ENCODE measurements at regions of chr22 and their contacts with region 1.

Region 1: DNA sequence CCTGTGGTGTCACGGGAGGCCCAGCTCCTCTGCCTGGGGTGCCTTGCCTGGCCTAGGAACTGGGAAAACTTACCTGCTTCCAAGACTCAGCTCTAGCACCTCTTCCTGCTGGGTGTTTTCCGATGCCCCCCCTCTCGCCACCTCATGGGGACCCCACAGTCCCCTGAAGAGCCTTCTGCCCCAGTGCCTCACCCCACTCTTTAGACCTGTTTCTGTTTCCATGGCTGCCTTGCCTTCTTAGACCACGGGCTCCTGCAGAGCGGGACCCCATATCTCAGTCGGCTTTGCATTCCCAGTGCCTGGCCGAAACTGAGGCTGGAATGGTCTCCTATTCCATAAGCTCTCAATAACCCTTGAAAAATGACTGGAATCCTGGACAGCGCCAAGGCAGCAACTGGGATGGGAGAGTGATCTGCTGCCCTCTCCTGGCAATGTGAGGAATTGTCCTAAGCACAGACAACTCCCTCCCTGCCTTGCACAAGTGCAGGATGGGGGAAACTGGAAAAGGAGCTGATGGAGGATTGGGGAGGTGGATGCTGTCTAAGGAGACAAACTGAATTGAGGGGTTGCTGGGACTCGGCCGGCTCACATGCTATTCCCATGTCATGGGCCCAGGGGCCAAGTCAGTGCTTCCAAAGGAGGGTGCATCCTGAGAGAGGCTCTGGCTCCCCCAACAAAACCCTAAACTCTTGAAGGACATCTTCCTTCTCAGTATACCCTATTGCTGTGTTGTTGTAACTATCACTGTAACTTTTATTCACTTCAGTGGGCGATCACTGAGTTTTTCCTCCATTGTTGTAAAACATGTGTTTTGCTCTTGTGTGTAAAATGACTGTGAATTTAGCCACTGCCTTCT is 26.6 kb upstream of the IL17RA start:
- DNase-seq: peak; percentile 73
- ATAC-seq: peak; percentile 100
- H3K4me3 ChIP-seq: no peak overlapping the region
- H3K27ac ChIP-seq: no peak overlapping the region
- H3K4me1 ChIP-seq: no peaks in the 10 kb centered on the region
- H3K27me3 ChIP-seq: peaks cover 9% of the 10 kb centered on the region
- CTCF ChIP-seq: peak; percentile 90
- POLR2A ChIP-seq: no peak
- RAD21 ChIP-seq: peak; percentile 74

Region 2: DNA sequence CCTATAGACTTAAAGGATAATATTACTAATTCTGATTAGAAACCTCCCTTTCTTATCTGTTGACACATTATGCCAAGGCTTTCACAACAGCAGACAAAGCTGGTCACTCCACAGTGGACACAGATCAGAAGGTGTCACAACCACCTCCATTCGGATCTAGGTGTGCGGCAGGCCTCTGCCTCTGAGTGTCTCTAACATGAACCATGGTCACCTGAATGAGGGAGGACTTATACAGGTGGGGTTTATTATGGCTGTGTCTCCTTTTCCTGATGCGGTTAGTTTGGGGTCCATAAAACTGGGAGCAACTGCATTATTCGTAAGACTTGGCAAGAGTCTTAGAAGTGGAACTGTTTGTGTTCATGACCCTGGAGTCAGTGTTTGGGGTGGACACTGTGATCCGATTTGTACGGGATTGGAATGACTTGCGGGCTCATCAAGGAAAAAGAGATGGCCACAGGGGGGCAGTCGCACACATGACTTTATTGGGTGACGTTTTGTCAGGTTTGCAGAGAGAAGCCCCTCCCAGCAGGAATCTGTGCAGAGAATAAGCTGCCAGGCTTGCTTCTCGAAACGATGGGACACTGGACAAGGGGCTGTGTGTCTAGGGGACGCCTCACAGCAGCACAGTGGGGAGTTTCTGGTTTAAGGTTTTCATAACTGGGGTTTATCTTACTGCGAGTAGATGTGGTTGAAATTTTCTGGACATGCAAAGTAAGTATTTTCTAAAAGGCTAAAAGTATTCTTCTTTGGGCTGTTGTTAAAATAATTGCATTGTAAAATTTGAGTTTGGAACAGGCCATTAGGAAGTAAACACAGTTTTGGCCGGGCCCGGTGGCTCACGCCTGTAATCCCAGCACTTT is 140.8 kb before region 1 on chr22:
- CTCF ChIA-PET with region 1: interaction called, 5 read pairs
- POLR2A ChIA-PET with region 1: no interaction called
- dilution Hi-C with region 1: no loop called
- in situ Hi-C with region 1: loop called (anchors 5 kb)
- intact Hi-C with region 1: loop called (anchors 2 kb)
- DNase-seq: peak; percentile 15
- ATAC-seq: peak; percentile 68
- H3K4me3 ChIP-seq: no peak overlapping the region
- H3K27ac ChIP-seq: no peak overlapping the region
- H3K4me1 ChIP-seq: no peaks in the 10 kb centered on the region
- H3K27me3 ChIP-seq: no peaks in the 10 kb centered on the region
- CTCF ChIP-seq: peak; percentile 49
- POLR2A ChIP-seq: no peak
- RAD21 ChIP-seq: peak; percentile 38

Region 3: GRCh38 chr22:16961477-16962186 is 96.6 kb before region 1 on chr22:
- CTCF ChIA-PET with region 1: no interaction called
- POLR2A ChIA-PET with region 1: no interaction called
- dilution Hi-C with region 1: no loop called
- in situ Hi-C with region 1: no loop called
- intact Hi-C with region 1: no loop called
- DNase-seq: no peak
- ATAC-seq: no peak
- H3K4me3 ChIP-seq: no peak overlapping the region
- H3K27ac ChIP-seq: no peak overlapping the region
- H3K4me1 ChIP-seq: no peaks in the 10 kb centered on the region
- H3K27me3 ChIP-seq: no peaks in the 10 kb centered on the region
- CTCF ChIP-seq: no peak
- POLR2A ChIP-seq: no peak
- RAD21 ChIP-seq: no peak

Region 4: GRCh38 chr22:17087498-17088131 is 29.4 kb after region 1 on chr22:
- CTCF ChIA-PET with region 1: no interaction called
- POLR2A ChIA-PET with region 1: no interaction called
- dilution Hi-C with region 1: no loop called
- in situ Hi-C with region 1: no loop called
- intact Hi-C with region 1: no loop called
- DNase-seq: peak; percentile 91
- ATAC-seq: no peak; the same call in 1 of the 2 replicates
- H3K4me3 ChIP-seq: no peak overlapping the region
- H3K27ac ChIP-seq: no peak overlapping the region
- H3K4me1 ChIP-seq: peaks cover 12% of the 10 kb centered on the region
- H3K27me3 ChIP-seq: no peaks in the 10 kb centered on the region
- CTCF ChIP-seq: no peak
- POLR2A ChIP-seq: no peak
- RAD21 ChIP-seq: no peak

Region 5: DNA sequence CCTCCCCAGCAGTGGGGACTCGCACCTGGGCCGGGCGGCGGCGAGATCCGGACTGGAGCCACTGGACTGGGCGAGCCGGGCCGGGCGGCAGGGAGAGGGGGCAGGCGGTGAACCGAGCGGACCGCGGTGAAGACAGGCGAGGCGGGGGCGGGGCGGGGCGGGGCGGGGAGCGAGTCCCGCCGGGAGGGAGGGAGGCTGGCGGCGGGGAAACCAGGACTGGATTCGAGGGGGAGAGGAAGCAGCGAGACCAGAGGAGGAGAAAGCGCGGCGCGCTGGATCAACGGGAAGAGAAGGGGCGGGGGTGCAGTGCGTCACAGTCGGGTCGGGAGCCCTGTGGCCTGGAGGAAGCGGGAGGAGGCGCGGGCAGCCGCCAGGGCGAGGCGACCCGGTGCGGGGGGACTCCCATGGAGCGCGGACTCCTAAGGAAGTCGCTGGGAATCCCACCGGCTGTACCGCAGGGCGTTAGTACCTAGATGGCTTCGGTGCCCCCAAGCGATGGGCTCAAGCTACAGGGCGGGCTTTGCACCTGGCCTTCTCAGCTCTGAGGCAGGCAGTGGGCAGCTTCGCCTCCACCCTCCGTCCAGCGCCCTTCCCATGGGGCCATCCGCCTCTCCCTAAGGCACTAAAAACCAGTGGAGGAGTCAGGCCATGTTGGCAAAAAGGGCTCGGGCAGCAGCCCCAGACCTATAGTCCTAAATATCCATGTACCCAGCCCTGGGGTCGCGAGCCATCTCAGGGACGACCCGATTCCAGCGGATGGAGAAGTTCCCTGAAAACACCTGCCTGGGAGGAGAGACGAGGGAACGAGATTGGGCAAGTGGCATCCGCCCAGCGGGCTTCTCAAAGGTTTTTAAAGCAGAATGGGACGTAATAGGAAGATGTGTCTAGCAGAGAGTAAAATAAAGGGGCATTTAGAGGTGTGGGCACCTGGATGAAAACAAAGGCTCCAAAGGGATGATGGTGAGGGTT is 63.3 kb after region 1 on chr22 and contains the start of gene TMEM121B:
- CTCF ChIA-PET with region 1: no interaction called
- POLR2A ChIA-PET with region 1: no interaction called
- dilution Hi-C with region 1: no loop called
- in situ Hi-C with region 1: no loop called
- intact Hi-C with region 1: no loop called
- DNase-seq: peak; percentile 59
- ATAC-seq: peak; percentile 81
- H3K4me3 ChIP-seq: peak within 1 kb of the TSS; percentile 47
- H3K27ac ChIP-seq: no peak within 1 kb of the TSS
- H3K4me1 ChIP-seq: no peaks in the 10 kb centered on the region
- H3K27me3 ChIP-seq: peaks cover 26% of the 10 kb centered on the region
- CTCF ChIP-seq: no peak
- POLR2A ChIP-seq: no peak
- RAD21 ChIP-seq: no peak
- total RNA-seq, gene TMEM121B: under 0.01 TPM in 2 replicates